Dendritic cell treated with granulocyte-macrophage colony-stimulating factor and Interleukin-4, amounts not matched to agents 40 ng/mL and 50 ng/mL, for 4 days (primary cell): ENCODE measurements at regions of chr11 and their contacts with region 1.

Region 1: GRCh38 chr11:118659314-118659952 is 20.0 kb downstream of the TREH start:
- H3K4me3 Mint-ChIP-seq: no peak overlapping the region
- H3K27ac Mint-ChIP-seq: no peak overlapping the region
- H3K4me1 Mint-ChIP-seq: no peaks in the 10 kb centered on the region
- H3K27me3 Mint-ChIP-seq: peaks cover 18% of the 10 kb centered on the region

Region 2: DNA sequence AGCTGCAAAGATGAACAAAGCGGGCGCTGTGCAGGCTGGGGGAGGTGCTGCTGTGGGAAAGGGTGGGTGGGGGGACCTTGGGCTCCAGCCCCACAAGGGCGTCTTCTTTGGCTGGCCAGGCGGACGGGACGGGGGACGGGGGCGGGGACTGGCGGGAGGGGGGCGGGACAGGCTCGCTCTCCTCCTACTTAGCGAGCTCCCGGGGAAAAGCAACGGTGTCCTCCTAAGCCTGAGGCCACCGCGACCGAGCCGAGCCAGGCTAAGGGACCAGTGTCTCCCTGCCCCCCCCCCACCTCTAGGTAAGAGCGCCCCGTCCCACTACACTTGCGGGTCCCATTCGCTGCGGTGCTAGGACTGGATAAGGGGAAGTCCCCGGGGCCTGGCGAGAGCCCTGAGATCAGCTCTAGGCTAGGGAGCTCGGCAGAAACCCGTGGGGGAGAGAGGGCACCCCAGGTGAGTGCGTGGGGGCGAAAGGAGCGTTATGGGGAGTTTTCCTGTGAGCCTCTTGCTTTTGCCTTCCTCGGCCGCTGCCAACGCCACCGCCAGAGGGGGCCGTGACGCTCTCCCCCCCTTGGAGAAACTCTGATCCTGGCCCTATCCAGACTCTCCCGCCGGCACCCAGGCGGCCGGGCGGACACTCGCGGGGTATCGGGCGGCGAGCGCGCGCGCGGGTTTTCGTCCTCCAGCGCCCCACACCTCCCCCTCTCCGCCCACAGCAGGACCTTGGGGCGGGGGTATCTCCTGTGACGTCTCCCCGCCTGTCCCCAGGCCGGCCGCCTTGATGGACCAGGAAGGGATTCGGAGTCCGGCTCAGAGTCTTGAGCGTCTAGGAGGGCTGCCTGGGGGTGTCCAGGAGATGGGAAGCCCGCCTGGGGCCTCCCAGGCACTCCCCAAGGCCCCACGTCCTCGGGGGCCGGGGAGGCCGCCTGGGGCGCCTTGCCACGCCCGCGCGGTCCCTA is 51.8 kb before region 1 on chr11 and contains the start of gene PHLDB1:
- intact Hi-C with region 1: loop called (anchors 5 kb)
- H3K4me3 Mint-ChIP-seq: peak within 1 kb of the TSS; percentile 64
- H3K27ac Mint-ChIP-seq: peak within 1 kb of the TSS; percentile 59
- H3K4me1 Mint-ChIP-seq: peaks cover 48% of the 10 kb centered on the region
- H3K27me3 Mint-ChIP-seq: peaks cover 58% of the 10 kb centered on the region

Region 3: DNA sequence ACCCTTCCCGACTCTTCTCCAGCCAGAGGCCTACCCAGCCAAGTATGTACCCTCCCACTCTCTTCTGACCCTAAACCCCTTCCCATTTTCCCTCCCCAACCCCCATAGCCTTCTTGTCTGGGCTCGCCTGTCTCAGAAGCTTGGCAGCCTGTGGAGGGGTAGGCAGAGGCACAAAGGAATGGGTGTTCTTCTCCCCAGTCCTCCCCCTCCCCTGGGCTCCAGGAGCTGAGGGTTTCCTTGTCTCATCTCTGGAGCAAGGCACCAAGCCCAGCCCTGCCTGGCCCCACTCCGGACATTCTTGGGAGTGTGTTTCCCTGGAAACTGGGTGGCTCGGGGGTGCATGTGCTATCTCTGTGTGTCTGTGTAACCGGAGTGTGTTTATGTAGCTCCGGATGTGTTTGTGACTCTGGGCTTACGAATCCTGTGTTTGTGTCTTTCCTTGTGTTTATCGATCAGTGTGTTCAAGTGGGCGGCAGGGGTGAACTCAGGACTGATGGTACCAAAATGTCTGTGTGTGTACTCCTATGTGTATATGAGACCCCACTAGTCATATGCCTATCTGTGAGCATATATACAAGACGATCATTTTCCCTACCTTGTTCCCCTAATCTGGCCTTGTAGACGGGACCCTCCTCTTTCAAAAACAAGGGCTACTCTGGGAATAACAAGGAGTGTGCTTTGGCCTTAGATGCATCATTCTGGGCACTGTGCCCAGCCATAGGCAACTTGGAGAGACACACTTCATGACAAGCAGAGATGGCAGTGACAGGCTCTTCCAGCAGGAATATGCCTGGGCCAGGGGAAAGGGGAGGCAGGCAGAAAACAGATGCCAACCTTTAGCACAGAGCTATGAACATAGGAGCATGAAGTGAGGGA is 41.1 kb before region 1 on chr11:
- intact Hi-C with region 1: no loop called
- H3K4me3 Mint-ChIP-seq: no peak overlapping the region
- H3K27ac Mint-ChIP-seq: peak overlapping the region; percentile 8
- H3K4me1 Mint-ChIP-seq: peaks cover 42% of the 10 kb centered on the region
- H3K27me3 Mint-ChIP-seq: peaks cover 29% of the 10 kb centered on the region